ENCODE measurements at regions of chr3 and their contacts with region 1.

Region 1: DNA sequence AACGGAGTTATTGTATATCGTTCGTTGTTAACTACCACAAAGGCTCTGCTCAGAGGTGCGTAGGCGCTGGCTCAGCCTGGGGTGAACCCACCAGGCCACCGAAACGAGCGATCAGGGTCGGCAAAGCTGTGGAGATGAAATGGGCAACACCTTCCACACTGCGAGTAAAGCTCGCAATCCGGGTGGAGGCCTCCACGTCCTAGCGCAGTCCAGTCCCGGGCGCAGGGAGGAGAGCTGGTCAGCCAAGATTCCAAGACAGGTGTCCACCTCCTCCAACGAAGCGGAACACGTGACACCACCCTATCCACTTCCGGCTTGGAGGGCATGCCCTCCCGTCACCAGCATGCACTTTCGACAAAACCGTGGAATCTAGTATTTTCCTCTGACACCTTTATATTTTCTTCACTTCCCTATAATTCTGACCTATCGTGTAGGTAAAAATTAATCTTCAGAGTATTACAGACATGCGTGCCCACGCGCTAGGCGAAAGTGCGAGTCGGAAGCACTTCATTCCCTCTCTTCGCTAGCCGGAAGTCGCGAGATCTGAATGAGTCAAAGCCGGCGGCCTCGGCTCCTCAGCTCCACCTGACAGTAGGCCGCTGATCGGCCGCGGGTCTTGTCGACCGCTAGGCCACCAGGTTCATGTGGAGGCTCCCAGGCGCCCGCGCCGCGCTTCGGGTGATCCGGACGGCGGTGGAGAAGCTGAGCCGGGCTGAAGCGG is at the start of gene PDE12:
- DNase-seq: peak; percentile 80

Region 2: DNA sequence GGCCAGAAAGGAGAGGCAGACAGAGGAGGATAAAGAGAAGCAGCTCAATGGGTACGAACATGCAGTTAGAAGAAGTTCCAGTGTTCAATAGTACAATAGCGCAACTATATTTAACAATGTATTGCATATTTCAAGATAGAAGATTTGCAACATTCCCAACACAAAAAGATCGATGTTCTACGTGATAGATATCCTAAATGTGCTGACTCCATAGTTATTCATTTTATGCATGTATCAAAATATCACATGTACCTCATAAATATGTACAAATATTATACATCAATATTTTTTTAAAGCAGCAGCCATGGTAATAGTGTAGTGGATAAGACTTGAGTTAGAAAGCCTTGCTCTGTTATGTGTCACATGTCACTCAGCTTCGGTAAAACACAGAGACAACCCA is 153.2 kb before region 1 on chr3:
- CTCF ChIA-PET with region 1: no interaction called
- POLR2A ChIA-PET with region 1: no interaction called
- DNase-seq: no peak

Region 3: GRCh38 chr3:57544181-57545125 is 11.4 kb before region 1 on chr3 and contains the start of gene DNAH12:
- CTCF ChIA-PET with region 1: no interaction called
- POLR2A ChIA-PET with region 1: interaction called, 19 read pairs
- DNase-seq: peak; percentile 78

Region 4: GRCh38 chr3:57597122-57597923 is 41.4 kb after region 1 on chr3 and contains the start of gene ARF4:
- CTCF ChIA-PET with region 1: no interaction called
- POLR2A ChIA-PET with region 1: interaction called, 30 read pairs
- DNase-seq: peak; percentile 98

Region 5: DNA sequence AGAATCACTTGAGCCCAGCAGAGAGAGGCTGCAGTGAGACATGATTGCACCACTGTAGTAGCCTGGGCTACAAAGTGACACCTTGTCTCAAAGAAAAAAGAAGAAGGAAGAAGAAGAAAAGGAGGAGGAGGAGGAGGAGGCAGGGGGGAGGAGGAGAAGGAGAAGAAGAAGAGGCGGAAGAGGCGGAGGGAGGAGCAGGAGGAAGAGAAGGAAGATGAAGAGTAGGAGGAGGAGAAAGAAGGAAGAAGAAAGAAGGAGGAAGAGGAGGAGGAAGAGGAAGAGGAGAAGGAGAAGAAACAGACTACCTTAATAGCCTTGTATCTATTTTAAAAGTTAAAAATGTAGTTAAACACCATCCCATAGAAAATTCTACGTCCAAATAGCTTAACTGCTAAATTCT is 60.3 kb after region 1 on chr3:
- CTCF ChIA-PET with region 1: no interaction called
- POLR2A ChIA-PET with region 1: no interaction called
- DNase-seq: no peak

Measured in HEK293T (cell line).